ENCODE measurements at regions of chr14 and their contacts with region 1.

Region 1: GRCh38 chr14:77457522-77458290 is at the starts of genes AHSA1 and VIPAS39:
- DNase-seq: peak; percentile 99
- H3K4me3 ChIP-seq: peak within 1 kb of the TSS; percentile 87 to 99 (median 90)
- H3K27ac ChIP-seq: peak within 1 kb of the TSS; percentile 91 to 99 (median 92)
- H3K4me1 ChIP-seq: peaks cover 25 to 59% (median 34%) of the 10 kb centered on the region in 4 donors
- H3K27me3 ChIP-seq: no peaks in the 10 kb centered on the region
- CTCF ChIP-seq: peak in 1 of 3 experiments; percentile 5
- EP300 ChIP-seq: no peak
- POLR2A ChIP-seq: peak; percentile 52
- total RNA-seq, gene AHSA1: 111 to 132 (median 116) TPM
- total RNA-seq, gene VIPAS39: 14.1 to 22.9 (median 17.8) TPM

Region 2: DNA sequence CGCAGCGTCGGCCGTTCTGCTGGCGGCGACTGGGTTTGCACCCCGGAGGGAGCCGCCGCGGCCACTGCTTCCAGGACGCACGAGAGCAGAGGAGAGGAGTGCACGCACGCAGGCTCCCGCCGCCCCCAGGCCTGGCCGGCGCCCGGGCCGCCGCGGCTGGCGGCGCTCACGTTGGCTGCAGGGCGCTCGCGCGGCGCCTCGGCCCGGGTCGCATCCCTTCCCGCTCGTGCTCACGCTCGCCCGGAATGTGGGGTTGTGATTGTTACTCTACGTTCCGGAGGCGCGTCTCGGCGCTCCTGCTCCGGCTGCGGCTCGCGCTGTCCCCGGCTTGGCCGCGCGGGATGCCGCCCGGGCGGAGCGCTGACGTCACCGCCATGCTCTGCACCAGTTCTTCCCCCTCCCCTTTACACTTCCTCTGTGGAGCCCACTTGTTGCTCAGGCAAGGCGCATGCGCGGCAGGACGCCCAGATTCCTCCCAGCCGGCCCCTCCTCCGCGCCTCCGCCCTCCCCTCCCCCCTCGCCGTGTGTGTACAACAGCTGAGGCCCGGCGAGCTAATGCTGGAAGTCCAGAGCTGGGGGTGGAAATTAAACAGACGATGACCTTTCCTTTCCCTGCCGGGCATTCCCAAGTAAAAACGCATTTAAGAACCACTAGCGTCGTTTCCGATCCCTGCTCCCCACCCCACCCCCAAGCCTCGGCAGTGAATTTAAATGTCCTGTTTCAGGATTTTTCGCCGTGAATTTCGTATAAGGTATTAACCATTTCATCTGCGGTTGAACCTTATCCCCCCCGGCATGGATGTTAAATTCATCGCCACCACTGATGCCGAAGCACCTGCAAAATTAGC is 429.1 kb before region 1 on chr14 and contains the start of gene IRF2BPL:
- intact Hi-C with region 1: no loop called
- DNase-seq: peak; percentile 99
- H3K4me3 ChIP-seq: peak within 1 kb of the TSS; percentile 79 to 93 (median 86)
- H3K27ac ChIP-seq: peak within 1 kb of the TSS; percentile 98 to 100 (median 100)
- H3K4me1 ChIP-seq: peaks cover 65 to 80% (median 78%) of the 10 kb centered on the region in 4 donors
- H3K27me3 ChIP-seq: no peaks in the 10 kb centered on the region
- CTCF ChIP-seq: no peak
- EP300 ChIP-seq: peak; percentile 80
- POLR2A ChIP-seq: peak; percentile 88
- total RNA-seq, gene IRF2BPL: 58.6 to 105 (median 98.4) TPM

Region 3: DNA sequence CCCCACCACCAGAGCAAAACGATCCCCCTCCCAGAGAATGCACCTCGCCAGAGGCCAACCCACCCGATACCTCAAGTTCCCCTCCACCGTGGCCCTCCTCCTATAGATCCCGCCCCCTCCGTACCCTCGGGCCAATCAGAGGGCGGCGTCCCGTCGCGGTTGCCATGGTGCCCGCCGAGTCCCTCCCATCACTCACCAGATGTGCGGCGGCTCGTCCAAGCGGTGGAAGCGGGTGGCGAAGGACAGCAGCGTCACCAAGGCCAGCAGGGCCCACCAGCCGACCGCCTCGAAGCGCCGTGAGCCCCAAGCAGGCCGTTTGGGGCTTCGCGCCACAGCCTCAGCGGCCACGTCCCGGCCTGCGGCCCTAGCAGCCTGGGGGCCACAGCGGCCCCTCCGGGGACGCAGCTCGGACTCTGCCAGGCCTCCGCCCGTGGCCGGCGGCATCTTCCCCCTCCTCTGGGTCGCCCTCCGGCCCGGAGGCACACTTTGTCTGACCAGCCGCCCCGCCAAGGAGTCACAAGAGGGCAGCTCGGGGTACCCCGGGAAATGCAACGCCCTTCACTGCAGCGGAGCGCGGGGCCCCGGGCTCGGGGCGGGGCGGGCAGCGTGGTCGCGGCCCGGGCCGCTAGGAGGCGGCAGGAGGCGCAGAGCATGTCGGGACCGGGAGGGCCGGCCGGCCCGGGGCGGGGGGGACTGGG is 137.3 kb before region 1 on chr14 and contains the start of gene POMT2:
- intact Hi-C with region 1: loop called (anchors 5 kb)
- DNase-seq: peak; percentile 97
- H3K4me3 ChIP-seq: peak within 1 kb of the TSS; percentile 74 to 100 (median 89)
- H3K27ac ChIP-seq: peak within 1 kb of the TSS; percentile 94 to 99 (median 97)
- H3K4me1 ChIP-seq: peaks cover 23 to 41% (median 32%) of the 10 kb centered on the region in 4 donors
- H3K27me3 ChIP-seq: no peaks in the 10 kb centered on the region
- CTCF ChIP-seq: peak; percentile 59 to 67 (median 67)
- EP300 ChIP-seq: no peak
- POLR2A ChIP-seq: peak; percentile 34
- total RNA-seq, gene POMT2: 13.3 to 29.2 (median 14.5) TPM

Region 4: DNA sequence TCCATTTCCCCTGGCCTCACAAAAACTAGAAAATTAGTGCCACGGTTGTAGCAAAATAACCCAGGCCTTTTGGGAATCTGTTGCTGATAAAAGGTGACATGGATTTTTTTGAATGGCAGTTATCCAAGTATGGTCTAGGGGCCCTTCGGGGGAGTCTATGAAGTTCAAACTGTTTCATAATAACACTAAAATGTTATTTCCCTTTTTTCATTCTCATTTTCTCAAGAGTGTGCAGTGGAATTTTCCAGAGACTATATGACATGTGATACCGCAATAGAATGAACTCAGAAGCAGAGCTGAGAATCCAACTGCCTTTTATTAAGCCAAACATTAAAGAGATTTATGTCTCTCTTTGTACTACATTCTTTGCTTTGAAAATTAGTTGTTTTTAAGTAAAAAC is 110.0 kb before region 1 on chr14:
- intact Hi-C with region 1: no loop called
- DNase-seq: no peak
- H3K4me3 ChIP-seq: no peak overlapping the region
- H3K27ac ChIP-seq: no peak overlapping the region
- H3K4me1 ChIP-seq: no peaks in the 10 kb centered on the region
- H3K27me3 ChIP-seq: no peaks in the 10 kb centered on the region
- CTCF ChIP-seq: no peak
- EP300 ChIP-seq: no peak
- POLR2A ChIP-seq: no peak

Region 5: DNA sequence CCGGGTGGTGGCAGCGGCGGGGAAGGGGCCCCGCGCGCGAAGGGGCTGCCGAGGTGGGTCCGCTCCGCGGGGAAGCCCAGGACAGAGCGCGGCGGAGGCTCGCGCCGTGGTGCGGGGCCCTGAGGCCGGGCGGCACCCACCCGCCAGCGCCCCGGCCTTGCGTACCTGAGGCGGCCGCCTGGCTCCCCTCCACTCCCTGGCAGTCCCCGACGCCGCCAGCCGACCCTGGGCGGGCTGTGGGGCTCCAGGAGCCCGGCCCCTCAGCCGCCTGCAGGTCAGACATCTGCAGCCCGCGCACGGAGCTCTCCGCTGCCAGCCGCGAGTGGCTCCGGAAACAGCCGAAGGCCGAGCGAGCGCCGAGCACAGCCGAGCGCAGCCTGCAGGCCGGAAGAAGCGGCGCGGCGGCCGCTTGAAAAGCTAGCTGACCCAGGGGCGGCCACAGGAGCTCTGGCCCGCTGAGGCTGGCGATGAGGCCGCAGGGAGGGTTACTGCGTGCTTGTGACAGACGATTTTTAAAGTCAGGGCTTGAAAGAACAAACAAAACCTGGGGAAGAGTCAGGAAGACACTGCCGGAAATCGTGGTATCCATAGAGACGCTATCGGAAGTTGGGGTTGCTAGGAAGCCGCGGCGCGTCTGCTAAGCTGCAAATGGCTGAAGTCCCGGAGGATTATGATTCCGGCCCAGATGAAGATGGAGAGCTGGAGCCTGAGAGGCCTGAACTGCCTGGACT is 80.8 kb before region 1 on chr14 and contains the starts of genes SAMD15 and TMED8:
- intact Hi-C with region 1: loop called (anchors 5 kb)
- DNase-seq: peak; percentile 93
- H3K4me3 ChIP-seq: peak within 1 kb of the TSS; percentile 85 to 95 (median 92)
- H3K27ac ChIP-seq: peak within 1 kb of the TSS; percentile 87 to 89 (median 87)
- H3K4me1 ChIP-seq: peaks cover 14 to 28% (median 21%) of the 10 kb centered on the region in 4 donors
- H3K27me3 ChIP-seq: no peaks in the 10 kb centered on the region
- CTCF ChIP-seq: peak; percentile 12 to 48 (median 19)
- EP300 ChIP-seq: no peak
- POLR2A ChIP-seq: no peak
- total RNA-seq, gene SAMD15: 0.42 to 0.52 (median 0.51) TPM
- total RNA-seq, gene TMED8: 15.2 to 21.8 (median 16.7) TPM

Region 6: GRCh38 chr14:77554207-77554606 is 96.5 kb after region 1 on chr14:
- intact Hi-C with region 1: loop called (anchors 2 kb)
- DNase-seq: no peak
- H3K4me3 ChIP-seq: no peak overlapping the region
- H3K27ac ChIP-seq: peak overlapping the region in 2 of 4 donors; percentile 9 to 29
- H3K4me1 ChIP-seq: peaks cover 0 to 7% (median 3%) of the 10 kb centered on the region in 4 donors
- H3K27me3 ChIP-seq: no peaks in the 10 kb centered on the region
- CTCF ChIP-seq: no peak
- EP300 ChIP-seq: no peak
- POLR2A ChIP-seq: no peak

Region 7: DNA sequence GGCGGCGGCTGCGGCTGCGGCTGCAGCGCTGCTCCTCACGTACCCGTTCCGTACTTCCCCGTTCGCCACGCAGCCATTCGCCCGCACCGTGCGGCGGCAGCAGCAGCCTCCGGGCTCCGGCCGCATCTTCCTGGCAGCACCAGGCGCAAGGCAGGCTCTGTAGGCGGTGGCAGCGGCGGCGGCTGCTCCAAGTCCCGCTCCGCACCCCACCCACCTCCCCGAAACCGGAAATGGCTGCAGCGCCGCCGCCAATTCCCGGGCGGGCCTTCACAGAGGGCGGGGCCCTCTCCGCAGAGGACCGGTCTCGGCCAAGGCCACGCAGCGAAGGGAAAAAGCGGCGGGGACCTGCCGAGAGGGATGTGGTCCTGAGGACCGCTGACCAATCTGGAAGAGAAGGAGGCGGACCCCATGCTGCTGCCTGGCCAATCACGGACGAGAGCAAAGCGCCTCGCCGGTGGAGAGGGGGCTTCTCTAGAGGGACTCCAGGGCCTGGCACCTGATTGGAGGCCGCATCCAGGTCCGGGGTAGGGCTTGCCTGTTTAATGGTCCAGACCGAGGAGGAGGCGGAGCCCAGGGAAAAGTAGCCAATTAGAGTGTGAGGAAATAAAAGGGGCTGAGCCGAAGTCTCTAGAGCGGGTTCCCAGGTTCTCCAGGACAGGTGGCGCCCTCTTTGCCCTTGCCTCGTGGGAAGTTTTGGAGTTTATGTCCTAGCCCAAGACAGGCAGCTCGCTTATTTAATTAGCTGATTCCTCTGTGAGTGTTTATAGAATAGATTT is 158.9 kb after region 1 on chr14 and contains the start of gene SPTLC2:
- intact Hi-C with region 1: loop called (anchors 5 kb)
- DNase-seq: peak; percentile 100
- H3K4me3 ChIP-seq: peak within 1 kb of the TSS; percentile 70 to 95 (median 89)
- H3K27ac ChIP-seq: peak within 1 kb of the TSS; percentile 78 to 91 (median 82)
- H3K4me1 ChIP-seq: peaks cover 14 to 23% (median 17%) of the 10 kb centered on the region in 4 donors
- H3K27me3 ChIP-seq: no peaks in the 10 kb centered on the region
- CTCF ChIP-seq: no peak
- EP300 ChIP-seq: no peak
- POLR2A ChIP-seq: peak; percentile 58
- total RNA-seq, gene SPTLC2: 14.5 to 25.3 (median 20.1) TPM

Region 8: GRCh38 chr14:77707724-77708408 is 250.2 kb after region 1 on chr14 and contains the starts of genes ALKBH1 and SLIRP:
- intact Hi-C with region 1: loop called (anchors 5 kb)
- DNase-seq: peak; percentile 96
- H3K4me3 ChIP-seq: peak within 1 kb of the TSS; percentile 78 to 90 (median 83)
- H3K27ac ChIP-seq: peak within 1 kb of the TSS; percentile 74 to 78 (median 74)
- H3K4me1 ChIP-seq: peaks cover 29 to 44% (median 34%) of the 10 kb centered on the region in 4 donors
- H3K27me3 ChIP-seq: no peaks in the 10 kb centered on the region
- CTCF ChIP-seq: no peak
- EP300 ChIP-seq: no peak
- POLR2A ChIP-seq: no peak
- total RNA-seq, gene ALKBH1: 8.0 to 13.3 (median 11.8) TPM
- total RNA-seq, gene SLIRP: 101 to 247 (median 166) TPM

Region 9: DNA sequence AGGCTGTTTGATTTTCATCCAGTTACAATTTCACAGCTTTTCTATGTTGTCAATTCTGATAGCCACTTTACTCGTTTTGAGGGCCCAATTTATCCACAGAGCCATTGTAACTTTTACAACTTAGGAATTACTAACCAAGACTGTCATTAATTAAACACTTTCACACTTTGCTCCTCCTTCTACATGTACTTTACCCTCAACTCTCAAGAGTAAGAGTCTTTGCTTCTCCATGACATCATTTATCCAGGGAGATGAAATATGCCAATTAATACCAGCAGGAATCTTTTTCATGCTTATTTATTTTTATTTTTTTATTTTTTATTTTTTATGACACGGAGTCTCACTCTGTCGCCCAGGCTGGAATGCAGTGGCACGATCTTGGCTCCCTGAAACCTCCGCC is 263.7 kb after region 1 on chr14:
- intact Hi-C with region 1: loop called (anchors 5 kb)
- DNase-seq: no peak
- H3K4me3 ChIP-seq: no peak overlapping the region
- H3K27ac ChIP-seq: no peak overlapping the region
- H3K4me1 ChIP-seq: no peaks in the 10 kb centered on the region
- H3K27me3 ChIP-seq: no peaks in the 10 kb centered on the region
- CTCF ChIP-seq: no peak
- EP300 ChIP-seq: no peak
- POLR2A ChIP-seq: no peak

Region 10: GRCh38 chr14:78010688-78011087 is 553.0 kb after region 1 on chr14:
- intact Hi-C with region 1: no loop called
- DNase-seq: no peak
- H3K4me3 ChIP-seq: no peak overlapping the region
- H3K27ac ChIP-seq: no peak overlapping the region
- H3K4me1 ChIP-seq: no peaks in the 10 kb centered on the region
- H3K27me3 ChIP-seq: peaks cover 0 to 8% (median 0%) of the 10 kb centered on the region in 4 donors
- CTCF ChIP-seq: no peak
- EP300 ChIP-seq: no peak
- POLR2A ChIP-seq: no peak

Measured in esophagus muscularis mucosa (tissue), 4 donors.